Adrenal gland (tissue), 19 donors: ENCODE measurements at regions of chr14 and their contacts with region 1.

Region 1: GRCh38 chr14:68911594-68912227 is 67.4 kb downstream of the ACTN1 start:
- DNase-seq: peak; percentile 64 to 86 (median 72)
- H3K4me3 ChIP-seq: no peak overlapping the region
- H3K27ac ChIP-seq: no peak overlapping the region
- H3K4me1 ChIP-seq: no peaks in the 10 kb centered on the region
- H3K27me3 ChIP-seq: no peaks in the 10 kb centered on the region
- CTCF ChIP-seq: peak; percentile 94 to 98 (median 96)
- POLR2A ChIP-seq: no peak

Region 2: DNA sequence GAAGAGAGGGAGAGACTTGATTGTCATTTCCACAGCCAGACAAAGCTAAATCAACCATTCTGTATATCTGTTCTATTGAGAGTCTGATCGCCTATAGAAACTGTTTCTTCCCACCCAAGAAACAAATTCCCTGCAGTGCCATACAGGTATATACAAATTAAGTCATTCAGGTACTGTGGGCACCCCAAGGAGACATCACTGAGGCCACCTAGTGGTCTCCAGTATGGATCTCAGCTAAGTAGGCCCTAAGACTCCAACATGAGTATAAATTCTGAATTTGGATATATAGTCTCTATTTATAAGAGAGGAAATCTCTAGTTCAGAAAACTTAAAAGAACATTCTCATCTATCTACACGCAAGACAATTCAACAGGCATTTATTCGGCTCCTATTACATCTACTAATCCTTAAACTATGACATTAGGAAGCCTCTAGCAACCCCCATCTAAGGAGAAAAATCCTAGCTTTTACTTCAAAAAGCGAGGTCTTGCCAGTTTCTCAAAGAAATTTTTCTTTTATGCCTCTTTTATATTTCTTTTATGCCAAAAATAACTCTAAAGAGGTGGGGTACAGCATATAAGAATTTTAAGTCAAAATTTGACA is 178.6 kb after region 1 on chr14:
- intact Hi-C with region 1: loop called in 1 of 2 experiments (anchors 5 kb)
- DNase-seq: peak in 1 of 7 donors; percentile 43
- H3K4me3 ChIP-seq: no peak overlapping the region
- H3K27ac ChIP-seq: no peak overlapping the region
- H3K4me1 ChIP-seq: peaks cover 11 to 39% of the 10 kb centered on the region in 2 donors
- H3K27me3 ChIP-seq: no peaks in the 10 kb centered on the region
- CTCF ChIP-seq: peak; percentile 29 to 63 (median 54)
- POLR2A ChIP-seq: no peak

Region 3: DNA sequence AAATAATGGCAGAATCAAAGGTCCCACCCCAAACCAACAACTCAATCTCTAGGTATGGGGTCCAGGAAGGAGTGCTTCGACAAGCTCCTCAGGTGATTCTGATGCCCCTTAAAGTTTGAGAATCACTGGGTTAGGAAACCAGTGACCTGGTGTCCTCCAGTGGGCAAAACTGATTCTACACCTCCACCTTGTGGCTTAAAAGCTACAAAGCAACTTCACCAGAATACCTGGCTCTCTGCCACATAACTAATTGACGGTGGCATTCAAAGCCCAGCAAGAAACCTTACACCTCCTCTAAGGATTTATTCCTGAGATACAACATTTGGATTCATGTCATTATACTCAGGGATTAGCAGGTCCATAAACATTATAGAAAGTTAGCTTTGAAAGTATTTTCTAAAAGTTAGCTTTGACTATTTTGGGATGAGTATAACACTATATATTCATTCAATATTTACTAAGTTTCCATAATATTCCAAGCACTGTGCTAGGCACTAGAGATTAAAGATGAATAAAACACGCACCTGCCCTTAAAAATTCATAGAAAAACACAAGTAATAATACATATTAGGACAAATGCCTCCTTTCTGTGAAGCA is 195.8 kb after region 1 on chr14:
- intact Hi-C with region 1: loop called (anchors 5 to 10 kb)
- DNase-seq: peak; percentile 40 to 73 (median 54)
- H3K4me3 ChIP-seq: no peak overlapping the region
- H3K27ac ChIP-seq: no peak overlapping the region
- H3K4me1 ChIP-seq: peaks cover 0 to 18% of the 10 kb centered on the region in 2 donors
- H3K27me3 ChIP-seq: no peaks in the 10 kb centered on the region
- CTCF ChIP-seq: peak; percentile 43 to 87 (median 81)
- POLR2A ChIP-seq: no peak